ENCODE measurements at regions of chr5 and their contacts with region 1.

Region 1: DNA sequence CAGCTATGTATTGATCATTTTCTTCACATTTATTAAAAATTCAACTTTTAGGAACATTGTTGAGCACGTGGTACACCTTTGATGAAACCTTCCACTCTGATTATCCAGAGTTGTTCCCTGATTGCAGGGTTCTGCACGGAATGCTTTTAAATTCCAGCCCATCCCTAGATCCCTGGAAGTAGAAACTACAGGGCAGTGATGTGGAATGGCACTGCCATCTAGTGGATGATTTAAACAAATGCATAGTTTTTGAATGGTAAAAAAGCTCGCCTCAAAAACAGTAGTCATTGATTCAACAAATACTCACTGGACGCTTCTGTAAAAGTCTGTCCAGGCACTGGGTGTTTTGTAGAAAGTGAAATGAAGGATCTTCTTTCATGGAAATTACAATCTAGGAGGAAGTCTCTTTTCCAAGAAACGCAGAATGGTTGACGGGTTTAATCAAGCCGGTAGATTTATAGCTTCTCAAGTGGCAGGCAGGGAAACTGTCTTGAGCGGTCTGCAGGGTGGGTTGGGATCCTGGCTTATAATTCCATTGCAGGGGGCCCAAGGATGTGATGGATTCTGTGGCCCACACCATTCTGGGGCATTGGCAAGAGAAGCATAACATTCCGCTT is 118.4 kb downstream of the ARHGAP26 start:
- DNase-seq: peak; percentile 74
- ATAC-seq: peak; percentile 78
- H3K4me3 ChIP-seq: no peak overlapping the region
- H3K27ac ChIP-seq: no peak overlapping the region
- H3K4me1 ChIP-seq: peaks cover 11% of the 10 kb centered on the region; the same call in 1 of the 2 replicates
- H3K27me3 ChIP-seq: no peaks in the 10 kb centered on the region
- CTCF ChIP-seq: peak; percentile 78

Region 2: GRCh38 chr5:142748568-142749249 is 139.9 kb before region 1 on chr5:
- CTCF ChIA-PET with region 1: no interaction called
- POLR2A ChIA-PET with region 1: no interaction called
- intact Hi-C with region 1: loop called (anchors 10 kb)
- DNase-seq: peak; percentile 54
- ATAC-seq: peak; percentile 65
- H3K4me3 ChIP-seq: no peak overlapping the region
- H3K27ac ChIP-seq: peak overlapping the region; percentile 54
- H3K4me1 ChIP-seq: peaks cover 23% of the 10 kb centered on the region
- H3K27me3 ChIP-seq: no peaks in the 10 kb centered on the region
- CTCF ChIP-seq: peak; percentile 79

Region 3: DNA sequence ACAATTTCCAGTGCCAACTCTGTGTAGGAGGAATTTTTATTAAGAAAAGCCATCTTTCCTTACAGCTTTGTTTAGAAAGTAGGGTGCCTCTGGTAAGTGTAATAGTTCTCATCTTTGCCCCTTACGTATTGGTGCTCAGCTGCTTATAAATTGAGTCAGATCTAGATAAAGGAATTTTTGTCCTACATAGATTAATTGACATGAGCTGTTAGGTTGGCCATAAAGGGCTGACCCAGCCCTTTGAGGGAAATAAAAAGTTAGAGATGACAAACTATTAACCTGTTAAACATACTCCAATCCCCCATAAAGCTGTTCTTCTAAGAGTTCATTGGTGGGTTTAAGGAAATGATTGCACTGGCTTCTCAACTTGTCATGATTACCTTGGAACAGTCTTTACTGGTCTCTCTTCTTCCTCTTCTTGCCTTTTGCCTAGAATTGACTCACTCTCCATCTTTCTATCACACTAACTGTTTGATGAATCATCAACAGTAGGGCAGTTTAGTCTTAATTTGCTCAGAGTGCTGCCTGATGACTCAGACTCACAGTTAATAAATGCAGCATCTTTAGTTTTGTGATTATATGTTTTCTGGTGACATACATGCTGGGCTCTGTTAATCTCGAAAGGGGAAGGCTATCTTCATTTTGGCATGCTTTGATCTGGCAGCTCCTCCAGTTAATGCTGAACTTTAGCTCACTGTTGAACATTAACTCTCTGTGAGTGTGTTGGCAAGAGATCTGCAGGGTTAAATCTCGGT is 66.7 kb before region 1 on chr5:
- CTCF ChIA-PET with region 1: no interaction called
- POLR2A ChIA-PET with region 1: no interaction called
- intact Hi-C with region 1: no loop called
- DNase-seq: peak; percentile 91
- ATAC-seq: peak; percentile 71
- H3K4me3 ChIP-seq: peak overlapping the region; percentile 34; the same call in 1 of the 2 replicates
- H3K27ac ChIP-seq: peak overlapping the region; percentile 97
- H3K4me1 ChIP-seq: peaks cover 98% of the 10 kb centered on the region
- H3K27me3 ChIP-seq: no peaks in the 10 kb centered on the region
- CTCF ChIP-seq: no peak

Region 4: DNA sequence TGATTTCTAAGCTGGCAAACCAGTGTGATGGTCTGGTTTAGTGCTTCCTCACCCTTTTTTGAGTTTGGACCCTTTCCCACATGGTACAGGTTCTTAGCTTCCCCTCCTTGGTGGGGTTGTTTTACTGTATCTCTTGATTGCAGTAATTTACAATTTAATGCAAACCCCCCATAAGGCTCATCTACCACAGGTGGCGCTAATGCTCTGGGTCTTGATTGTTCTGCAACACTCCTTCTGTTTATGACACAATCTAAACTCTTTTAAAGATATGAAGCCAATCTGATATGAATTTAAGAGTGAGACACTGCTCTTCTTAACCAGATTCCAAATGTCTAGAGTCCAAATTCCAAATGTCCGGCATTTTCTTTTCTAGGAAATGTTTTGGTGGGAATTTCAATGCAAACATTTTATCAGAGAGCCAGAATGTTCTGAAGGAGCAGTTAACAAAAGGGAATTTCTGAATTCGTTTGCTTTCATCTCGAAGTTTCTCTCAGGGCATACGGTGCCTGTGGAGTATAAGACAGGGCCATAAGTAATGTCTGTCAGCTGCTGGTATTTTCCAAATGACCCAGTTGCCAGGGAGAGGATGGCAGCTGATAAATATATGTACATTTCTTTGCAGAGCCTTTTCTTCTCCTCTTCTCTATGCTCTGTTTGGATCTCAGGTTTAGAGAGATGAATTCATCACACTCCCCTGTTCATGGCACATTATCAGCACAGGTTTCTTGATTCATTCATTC is 128.4 kb after region 1 on chr5:
- CTCF ChIA-PET with region 1: no interaction called
- POLR2A ChIA-PET with region 1: interaction called, 15 read pairs
- intact Hi-C with region 1: no loop called
- DNase-seq: peak; percentile 57
- ATAC-seq: peak; percentile 31; the same call in 1 of the 2 replicates
- H3K4me3 ChIP-seq: no peak overlapping the region
- H3K27ac ChIP-seq: peak overlapping the region; percentile 5; the same call in 1 of the 2 replicates
- H3K4me1 ChIP-seq: no peaks in the 10 kb centered on the region
- H3K27me3 ChIP-seq: no peaks in the 10 kb centered on the region
- CTCF ChIP-seq: peak; percentile 77

Measured in PC-3 (cell line).